MCF 10A (cell line): ENCODE measurements at regions of chr15 and their contacts with region 1.

Region 1: DNA sequence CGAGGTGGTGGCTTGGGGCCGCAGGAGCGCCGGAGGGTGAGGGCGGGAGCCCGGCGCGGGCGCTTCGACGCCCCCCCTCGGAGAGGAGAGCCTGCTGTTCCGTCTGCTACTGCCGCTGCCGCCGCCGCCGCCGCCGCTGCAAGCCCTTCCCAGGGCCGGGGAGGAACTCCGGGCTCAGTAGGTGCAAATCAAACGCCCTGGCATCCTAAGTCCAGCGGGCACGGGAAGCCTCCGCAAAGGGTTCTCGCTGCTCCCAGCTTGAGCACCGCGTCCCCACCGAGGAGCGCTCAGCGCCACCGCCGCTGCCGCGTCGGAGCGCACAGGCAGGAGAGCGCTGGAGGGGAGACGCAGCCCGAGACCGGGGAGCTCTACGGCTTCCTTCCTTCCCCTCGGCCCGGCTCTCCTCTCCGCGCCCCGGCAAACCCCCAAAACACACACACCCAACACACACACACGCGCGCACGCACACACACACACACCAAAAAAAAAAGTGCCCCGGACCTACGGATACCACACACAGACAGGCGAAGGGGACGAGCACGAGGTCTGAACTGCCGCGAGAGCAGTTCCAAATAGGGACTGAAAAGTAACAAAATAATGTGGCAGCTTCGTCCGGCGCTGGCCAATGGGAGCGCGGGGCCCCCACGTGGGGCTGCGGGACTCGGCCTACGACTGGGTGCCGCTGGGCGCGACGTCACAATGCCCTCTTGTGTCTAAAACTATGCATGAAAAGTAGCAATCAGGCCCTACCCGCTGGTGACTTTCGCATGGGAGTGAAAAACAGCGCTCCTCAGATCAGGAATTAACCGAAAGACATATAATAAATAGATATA is at the start of gene TLE3:
- DNase-seq: peak; percentile 98
- H3K4me3 Mint-ChIP-seq: peak within 1 kb of the TSS; percentile 92
- H3K27ac Mint-ChIP-seq: peak within 1 kb of the TSS; percentile 93
- H3K4me1 Mint-ChIP-seq: peaks cover 26% of the 10 kb centered on the region
- H3K27me3 Mint-ChIP-seq: no peaks in the 10 kb centered on the region
- CTCF ChIP-seq: peak; percentile 35
- total RNA-seq, gene TLE3: 21.6 and 23.2 TPM in 2 replicates

Region 2: DNA sequence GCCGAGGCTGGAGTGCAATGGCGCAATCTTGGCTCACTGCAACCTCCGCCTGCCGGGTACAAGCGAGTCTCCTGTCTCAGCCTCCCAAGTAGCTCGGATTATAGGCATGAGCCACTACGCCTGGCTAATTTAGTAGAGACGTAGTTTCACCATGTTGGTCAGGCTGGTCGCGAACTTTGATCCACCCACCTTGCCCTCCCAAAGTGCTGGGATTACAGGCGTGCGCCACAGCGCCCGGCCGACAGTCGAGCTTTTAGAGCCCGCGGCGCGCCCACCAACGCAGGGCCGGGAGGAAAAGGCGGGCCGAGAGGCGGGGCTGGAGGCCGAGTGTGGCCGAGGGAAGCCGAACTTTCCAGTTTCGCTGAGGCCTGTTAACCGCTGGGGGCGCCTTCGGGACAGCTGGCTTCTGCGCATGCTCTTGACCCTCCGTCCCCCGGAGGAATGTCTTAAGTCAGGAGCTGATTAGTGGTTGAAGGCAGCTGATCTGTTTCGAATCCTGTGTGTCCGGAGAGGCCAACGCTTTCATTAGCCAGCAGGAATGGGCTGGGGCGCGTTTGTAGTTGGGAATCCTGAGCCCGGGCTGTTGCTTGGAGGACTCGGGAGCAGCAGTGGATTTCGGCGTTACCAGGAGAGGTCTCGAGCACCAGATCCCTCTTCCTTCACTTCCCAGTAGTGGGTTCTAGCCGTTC is 634.9 kb before region 1 on chr15:
- CTCF ChIA-PET with region 1: interaction called, 4 read pairs
- POLR2A ChIA-PET with region 1: interaction called, 12 read pairs
- intact Hi-C with region 1: no loop called
- DNase-seq: peak; percentile 98
- H3K4me3 Mint-ChIP-seq: peak overlapping the region; percentile 83
- H3K27ac Mint-ChIP-seq: peak overlapping the region; percentile 93
- H3K4me1 Mint-ChIP-seq: peaks cover 10% of the 10 kb centered on the region
- H3K27me3 Mint-ChIP-seq: no peaks in the 10 kb centered on the region
- CTCF ChIP-seq: peak; percentile 83

Region 3: DNA sequence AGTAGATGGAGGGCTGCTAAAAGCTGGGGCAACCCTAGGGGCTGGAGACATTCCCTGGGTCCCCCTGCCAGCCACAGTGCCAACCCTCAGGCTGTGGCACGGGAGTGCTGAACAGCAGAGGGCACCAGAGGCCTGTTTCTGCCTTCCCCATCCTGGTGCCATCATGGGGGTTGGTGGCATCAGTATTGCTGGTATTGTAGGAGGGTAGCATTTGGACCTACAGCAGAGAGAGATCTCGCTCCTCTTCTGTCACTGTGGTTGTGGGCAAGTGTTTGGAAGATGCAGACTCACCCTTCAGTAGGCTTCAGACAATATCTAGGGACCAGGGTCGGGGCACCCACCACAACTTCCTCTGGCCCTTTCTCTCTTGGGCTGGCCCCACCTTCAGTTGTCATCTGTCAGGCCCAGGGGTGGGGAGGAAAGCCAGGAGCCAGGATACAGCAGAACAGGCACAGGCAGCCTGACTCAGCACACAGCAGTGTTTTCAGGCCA is 521.5 kb before region 1 on chr15:
- CTCF ChIA-PET with region 1: interaction called, 3 read pairs
- POLR2A ChIA-PET with region 1: interaction called, 8 read pairs
- intact Hi-C with region 1: loop called (anchors 1 kb)
- DNase-seq: peak; percentile 61
- H3K4me3 Mint-ChIP-seq: no peak overlapping the region
- H3K27ac Mint-ChIP-seq: no peak overlapping the region
- H3K4me1 Mint-ChIP-seq: peaks cover 21% of the 10 kb centered on the region
- H3K27me3 Mint-ChIP-seq: no peaks in the 10 kb centered on the region
- CTCF ChIP-seq: peak; percentile 82

Region 4: DNA sequence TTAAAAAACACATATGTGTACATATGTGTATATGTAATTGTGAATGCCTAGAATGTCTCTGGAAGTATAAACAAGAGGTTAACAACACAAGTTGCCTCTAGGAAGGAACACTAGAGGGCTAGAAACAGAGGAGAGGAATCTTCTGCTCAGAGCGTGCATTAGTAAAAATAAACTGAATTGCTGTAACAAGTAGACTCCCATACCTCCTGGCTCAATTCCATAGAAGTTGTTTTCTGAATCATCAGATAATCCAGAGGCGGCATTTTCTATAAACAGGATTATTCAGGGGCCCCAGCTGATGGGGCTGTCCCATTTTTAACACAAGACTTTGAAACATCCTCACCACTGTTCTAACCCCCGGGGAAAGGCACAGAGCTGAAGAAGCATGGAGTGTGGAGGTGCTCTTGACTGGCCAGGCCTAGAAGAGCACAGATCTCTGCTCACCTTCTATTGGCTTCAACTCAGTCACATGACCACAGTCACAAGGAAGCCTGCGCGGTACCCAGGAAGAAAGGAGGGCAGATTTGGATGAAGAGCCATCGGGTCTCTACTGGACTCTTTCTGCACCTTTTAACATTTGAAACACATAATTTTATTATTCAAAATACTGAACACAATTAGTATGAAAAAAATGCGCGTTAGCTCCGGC is 145.5 kb before region 1 on chr15:
- CTCF ChIA-PET with region 1: no interaction called
- POLR2A ChIA-PET with region 1: no interaction called
- intact Hi-C with region 1: loop called (anchors 10 kb)
- DNase-seq: peak; percentile 23
- H3K4me3 Mint-ChIP-seq: no peak overlapping the region
- H3K27ac Mint-ChIP-seq: no peak overlapping the region
- H3K4me1 Mint-ChIP-seq: no peaks in the 10 kb centered on the region
- H3K27me3 Mint-ChIP-seq: peaks cover 44% of the 10 kb centered on the region
- CTCF ChIP-seq: no peak

Region 5: GRCh38 chr15:70121624-70122297 is 24.2 kb after region 1 on chr15:
- CTCF ChIA-PET with region 1: interaction called, 4 read pairs
- POLR2A ChIA-PET with region 1: interaction called, 11 read pairs
- intact Hi-C with region 1: no loop called
- DNase-seq: peak; percentile 89
- H3K4me3 Mint-ChIP-seq: no peak overlapping the region
- H3K27ac Mint-ChIP-seq: no peak overlapping the region
- H3K4me1 Mint-ChIP-seq: peaks cover 16% of the 10 kb centered on the region
- H3K27me3 Mint-ChIP-seq: peaks cover 41% of the 10 kb centered on the region
- CTCF ChIP-seq: peak; percentile 31

Region 6: GRCh38 chr15:70415398-70415797 is 317.8 kb after region 1 on chr15:
- CTCF ChIA-PET with region 1: no interaction called
- POLR2A ChIA-PET with region 1: no interaction called
- intact Hi-C with region 1: no loop called
- DNase-seq: no peak
- H3K4me3 Mint-ChIP-seq: no peak overlapping the region
- H3K27ac Mint-ChIP-seq: no peak overlapping the region
- H3K4me1 Mint-ChIP-seq: peaks cover 4% of the 10 kb centered on the region
- H3K27me3 Mint-ChIP-seq: peaks cover 42% of the 10 kb centered on the region
- CTCF ChIP-seq: no peak

Region 7: DNA sequence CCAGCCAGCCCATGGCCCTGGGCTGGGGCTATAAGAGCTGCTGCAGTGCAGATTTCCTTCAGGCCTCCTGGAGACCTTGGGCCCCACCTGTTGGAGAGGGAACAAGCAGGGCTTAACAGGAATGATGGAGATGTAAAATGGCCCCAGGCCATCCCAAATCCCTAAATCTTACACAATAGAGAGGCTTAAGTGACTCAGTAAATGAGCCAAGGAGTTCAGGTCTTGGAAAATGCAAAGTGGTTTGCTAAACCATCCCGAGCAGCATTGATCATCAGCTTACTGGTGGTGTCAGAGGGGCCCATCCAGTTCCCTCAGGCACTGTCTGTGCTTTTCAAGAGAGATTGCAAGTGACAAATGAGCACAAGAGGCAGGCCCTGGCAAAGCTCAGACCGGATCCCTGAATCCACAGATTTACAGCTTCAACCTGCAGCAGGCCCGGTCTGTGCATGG is 340.4 kb after region 1 on chr15:
- CTCF ChIA-PET with region 1: interaction called, 3 read pairs
- POLR2A ChIA-PET with region 1: interaction called, 12 read pairs
- intact Hi-C with region 1: no loop called
- DNase-seq: peak; percentile 92
- H3K4me3 Mint-ChIP-seq: no peak overlapping the region
- H3K27ac Mint-ChIP-seq: no peak overlapping the region
- H3K4me1 Mint-ChIP-seq: peaks cover 17% of the 10 kb centered on the region
- H3K27me3 Mint-ChIP-seq: peaks cover 45% of the 10 kb centered on the region
- CTCF ChIP-seq: peak; percentile 27